Activated T-helper 2 cell treated with anti-CD3 and anti-CD28 coated beads, Interferon-gamma antibody, Interleukin-2, Interleukin-4, amounts not matched to agents 10 μg/mL and 5 μg/mL and 100 μg/mL, durations not matched to agents 14 hours and 24 hours and 36 hours (primary cell): ENCODE measurements at regions of chr2 and their contacts with region 1.

Region 1: GRCh38 chr2:120231974-120232635 is 8.9 kb upstream of the TMEM185B start:
- DNase-seq: peak; percentile 79
- H3K4me3 Mint-ChIP-seq: peak overlapping the region; percentile 91
- H3K27ac Mint-ChIP-seq: peak overlapping the region; percentile 98
- H3K4me1 Mint-ChIP-seq: peaks cover 58% of the 10 kb centered on the region
- H3K27me3 Mint-ChIP-seq: no peaks in the 10 kb centered on the region

Region 2: GRCh38 chr2:119929537-119929936 is 302.6 kb before region 1 on chr2:
- intact Hi-C with region 1: loop called (anchors 1 kb)
- DNase-seq: peak; percentile 18
- H3K4me3 Mint-ChIP-seq: peak overlapping the region; percentile 72
- H3K27ac Mint-ChIP-seq: peak overlapping the region; percentile 73
- H3K4me1 Mint-ChIP-seq: peaks cover 59% of the 10 kb centered on the region
- H3K27me3 Mint-ChIP-seq: no peaks in the 10 kb centered on the region

Region 3: GRCh38 chr2:120012771-120013596 is 219.1 kb before region 1 on chr2 and contains the start of gene EPB41L5:
- intact Hi-C with region 1: no loop called
- DNase-seq: peak; percentile 72
- H3K4me3 Mint-ChIP-seq: peak within 1 kb of the TSS; percentile 67
- H3K27ac Mint-ChIP-seq: no peak within 1 kb of the TSS
- H3K4me1 Mint-ChIP-seq: peaks cover 10% of the 10 kb centered on the region
- H3K27me3 Mint-ChIP-seq: peaks cover 27% of the 10 kb centered on the region
- total RNA-seq, gene EPB41L5: 0.94 and 1.5 TPM in 2 replicates

Region 4: GRCh38 chr2:120252225-120253021 is 20.3 kb after region 1 on chr2 and contains the start of gene RALB:
- intact Hi-C with region 1: loop called (anchors 1 kb)
- DNase-seq: peak; percentile 99
- H3K4me3 Mint-ChIP-seq: peak within 1 kb of the TSS; percentile 100
- H3K27ac Mint-ChIP-seq: peak within 1 kb of the TSS; percentile 93
- H3K4me1 Mint-ChIP-seq: peaks cover 53% of the 10 kb centered on the region
- H3K27me3 Mint-ChIP-seq: peaks cover 8% of the 10 kb centered on the region
- total RNA-seq, gene RALB: 58.4 and 65.0 TPM in 2 replicates

Region 5: DNA sequence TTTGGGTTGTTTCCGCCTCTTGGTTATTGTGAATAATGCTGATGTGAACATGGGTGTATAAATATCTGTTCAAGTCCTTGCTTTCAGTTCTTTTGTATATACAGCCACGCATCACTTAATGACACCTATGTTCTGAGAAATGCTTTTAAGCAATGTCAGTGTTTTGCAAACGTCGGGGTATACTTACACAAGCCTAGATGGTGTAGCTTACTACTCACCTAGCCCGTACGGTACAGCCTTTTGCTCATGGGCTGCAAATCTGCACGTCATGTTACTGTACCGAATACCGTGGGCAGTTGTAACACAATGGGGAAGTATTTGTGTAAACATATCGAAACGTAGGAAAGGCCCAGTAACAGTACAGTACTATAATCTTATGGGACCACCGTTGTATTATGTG is 32.9 kb after region 1 on chr2:
- intact Hi-C with region 1: loop called (anchors 5 kb)
- DNase-seq: no peak
- H3K4me3 Mint-ChIP-seq: no peak overlapping the region
- H3K27ac Mint-ChIP-seq: no peak overlapping the region
- H3K4me1 Mint-ChIP-seq: peaks cover 31% of the 10 kb centered on the region
- H3K27me3 Mint-ChIP-seq: no peaks in the 10 kb centered on the region

Region 6: GRCh38 chr2:120287183-120288015 is 55.3 kb after region 1 on chr2:
- intact Hi-C with region 1: loop called (anchors 2 kb)
- DNase-seq: peak; percentile 16
- H3K4me3 Mint-ChIP-seq: peak overlapping the region; percentile 49
- H3K27ac Mint-ChIP-seq: peak overlapping the region; percentile 91
- H3K4me1 Mint-ChIP-seq: peaks cover 68% of the 10 kb centered on the region
- H3K27me3 Mint-ChIP-seq: no peaks in the 10 kb centered on the region